ENCODE measurements at regions of chr14 and their contacts with region 1.

Region 1: DNA sequence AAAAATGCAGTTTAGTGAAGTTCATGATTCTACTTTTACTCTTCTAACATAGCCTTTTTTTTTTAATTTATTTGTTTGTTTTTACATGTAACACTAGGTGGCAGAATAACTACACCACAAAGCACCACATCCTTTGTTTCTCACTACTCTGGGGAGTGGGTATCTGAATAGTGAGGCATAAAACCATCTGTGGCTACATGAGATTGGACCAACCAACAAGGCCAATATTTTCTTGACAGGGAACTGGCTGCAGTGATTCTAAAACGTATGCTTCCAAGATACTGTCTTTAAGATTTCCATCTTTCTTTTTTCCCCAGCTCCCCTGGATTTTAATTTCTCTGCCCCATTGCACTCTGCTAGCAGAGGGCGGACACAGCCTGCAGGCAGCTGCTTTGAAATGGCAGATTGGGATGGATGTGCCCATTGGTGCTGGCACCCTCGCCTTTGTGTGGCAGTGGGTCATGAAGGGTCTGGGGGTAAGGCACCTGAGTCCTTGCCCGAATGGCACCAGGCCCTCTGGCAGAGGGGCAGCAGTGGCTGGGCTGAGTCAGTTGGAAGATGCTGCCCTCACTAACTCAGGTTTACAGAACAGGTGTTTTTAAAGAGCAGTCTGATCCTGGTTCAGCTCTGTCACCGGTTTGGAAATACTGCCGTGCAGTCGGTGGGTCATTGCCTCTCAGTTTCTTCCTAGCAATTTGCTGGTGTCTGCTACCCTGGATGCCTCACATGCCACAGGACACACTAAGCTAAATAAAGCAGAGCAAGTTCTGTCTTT is 429.1 kb downstream of the RAD51B start:
- DNase-seq: no peak
- H3K4me3 ChIP-seq: no peak overlapping the region
- H3K27ac ChIP-seq: peak overlapping the region; percentile 84 to 87 (median 86)
- H3K4me1 ChIP-seq: peaks cover 64 to 82% (median 71%) of the 10 kb centered on the region in 4 donors
- H3K27me3 ChIP-seq: no peaks in the 10 kb centered on the region
- CTCF ChIP-seq: peak; percentile 53 to 84 (median 61)
- EP300 ChIP-seq: no peak
- POLR2A ChIP-seq: no peak

Region 2: GRCh38 chr14:67943947-67944346 is 304.7 kb before region 1 on chr14:
- in situ Hi-C with region 1: loop called in 2 of 4 experiments (anchors 10 to 25 kb)
- intact Hi-C with region 1: loop called (anchors 10 kb)
- DNase-seq: peak; percentile 75
- H3K4me3 ChIP-seq: no peak overlapping the region
- H3K27ac ChIP-seq: peak overlapping the region; percentile 78 to 85 (median 80)
- H3K4me1 ChIP-seq: peaks cover 25 to 55% (median 33%) of the 10 kb centered on the region in 4 donors
- H3K27me3 ChIP-seq: no peaks in the 10 kb centered on the region
- CTCF ChIP-seq: peak; percentile 62 to 95 (median 70)
- EP300 ChIP-seq: no peak
- POLR2A ChIP-seq: no peak

Region 3: GRCh38 chr14:68137704-68138619 is 110.7 kb before region 1 on chr14:
- in situ Hi-C with region 1: loop called in 1 of 4 experiments (anchors 10 kb)
- intact Hi-C with region 1: loop called (anchors 10 kb)
- DNase-seq: peak; percentile 36
- H3K4me3 ChIP-seq: no peak overlapping the region
- H3K27ac ChIP-seq: peak overlapping the region; percentile 83 to 89 (median 88)
- H3K4me1 ChIP-seq: peaks cover 27 to 51% (median 36%) of the 10 kb centered on the region in 4 donors
- H3K27me3 ChIP-seq: no peaks in the 10 kb centered on the region
- CTCF ChIP-seq: no peak
- EP300 ChIP-seq: no peak
- POLR2A ChIP-seq: no peak

Region 4: GRCh38 chr14:68199554-68200151 is 49.0 kb before region 1 on chr14:
- in situ Hi-C with region 1: no loop called
- intact Hi-C with region 1: no loop called
- DNase-seq: no peak
- H3K4me3 ChIP-seq: no peak overlapping the region
- H3K27ac ChIP-seq: peak overlapping the region; percentile 51 to 79 (median 66)
- H3K4me1 ChIP-seq: peaks cover 6 to 42% (median 24%) of the 10 kb centered on the region in 4 donors
- H3K27me3 ChIP-seq: no peaks in the 10 kb centered on the region
- CTCF ChIP-seq: no peak
- EP300 ChIP-seq: no peak
- POLR2A ChIP-seq: no peak

Region 5: GRCh38 chr14:68589447-68590220 is 341.0 kb after region 1 on chr14:
- in situ Hi-C with region 1: no loop called
- intact Hi-C with region 1: loop called (anchors 5 kb)
- DNase-seq: peak; percentile 42
- H3K4me3 ChIP-seq: no peak overlapping the region
- H3K27ac ChIP-seq: peak overlapping the region; percentile 75 to 89 (median 82)
- H3K4me1 ChIP-seq: peaks cover 24 to 35% (median 31%) of the 10 kb centered on the region in 4 donors
- H3K27me3 ChIP-seq: no peaks in the 10 kb centered on the region
- CTCF ChIP-seq: no peak
- EP300 ChIP-seq: peak; percentile 81
- POLR2A ChIP-seq: no peak

Region 6: DNA sequence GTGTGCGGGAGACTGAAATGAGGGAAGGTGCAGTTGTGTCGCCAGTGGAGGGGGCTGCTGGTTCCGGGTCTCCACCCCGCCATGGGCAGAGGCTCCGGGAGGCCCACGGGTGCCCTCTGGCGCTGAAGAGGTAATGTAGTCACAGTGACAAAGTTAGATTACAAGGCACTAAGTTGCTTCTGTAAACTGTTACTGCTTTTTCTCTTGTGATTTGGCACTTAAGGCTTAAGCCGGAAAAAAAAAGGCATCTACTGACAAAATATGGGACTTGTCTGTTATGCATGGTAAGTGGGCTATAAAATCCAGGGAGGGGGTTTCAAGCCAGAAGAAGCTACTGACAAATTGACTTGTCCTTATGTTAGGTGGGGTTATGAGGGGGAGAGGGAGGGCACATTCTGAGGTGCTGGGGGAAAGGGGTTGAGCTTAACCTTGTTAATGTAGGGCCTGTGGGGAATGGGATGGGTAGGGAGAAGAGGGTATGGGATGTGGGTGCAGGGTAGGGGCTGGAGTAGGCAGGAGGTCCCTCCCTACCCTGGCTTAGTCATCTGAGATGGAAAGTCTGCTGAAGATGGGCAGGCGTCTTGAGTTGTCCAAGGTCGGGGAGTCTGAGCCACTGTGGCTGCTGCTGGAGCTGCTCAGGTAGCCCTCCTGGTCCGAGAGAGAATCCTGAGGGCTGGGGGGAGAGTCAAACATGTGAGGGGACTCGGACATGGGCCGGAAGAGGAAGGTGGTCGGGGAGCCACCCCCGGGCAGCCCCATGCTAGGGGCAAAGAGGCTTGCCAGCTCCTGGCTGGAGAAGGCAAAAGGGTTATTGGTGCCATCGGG is 540.5 kb after region 1 on chr14:
- in situ Hi-C with region 1: loop called in 2 of 4 experiments (anchors 10 kb)
- intact Hi-C with region 1: loop called (anchors 5 kb)
- DNase-seq: peak; percentile 91
- H3K4me3 ChIP-seq: peak overlapping the region; percentile 66 to 90 (median 80)
- H3K27ac ChIP-seq: peak overlapping the region; percentile 97 to 100 (median 98)
- H3K4me1 ChIP-seq: peaks cover 0 to 62% (median 45%) of the 10 kb centered on the region in 4 donors
- H3K27me3 ChIP-seq: no peaks in the 10 kb centered on the region
- CTCF ChIP-seq: peak; percentile 58 to 77 (median 77)
- EP300 ChIP-seq: no peak
- POLR2A ChIP-seq: peak; percentile 49

Region 7: GRCh38 chr14:68816262-68816942 is 567.7 kb after region 1 on chr14:
- in situ Hi-C with region 1: loop called in 3 of 4 experiments (anchors 10 to 25 kb)
- intact Hi-C with region 1: loop called (anchors 2 kb)
- DNase-seq: peak; percentile 92
- H3K4me3 ChIP-seq: peak overlapping the region in 3 of 4 donors; percentile 27 to 54 (median 43)
- H3K27ac ChIP-seq: peak overlapping the region; percentile 94 to 97 (median 96)
- H3K4me1 ChIP-seq: peaks cover 40 to 66% (median 46%) of the 10 kb centered on the region in 4 donors
- H3K27me3 ChIP-seq: no peaks in the 10 kb centered on the region
- CTCF ChIP-seq: peak; percentile 94 to 99 (median 97)
- EP300 ChIP-seq: no peak
- POLR2A ChIP-seq: peak; percentile 60

Measured in transverse colon (tissue), 4 donors.